B cell (primary cell): ENCODE measurements at regions of chr5 and their contacts with region 1.

Region 1: DNA sequence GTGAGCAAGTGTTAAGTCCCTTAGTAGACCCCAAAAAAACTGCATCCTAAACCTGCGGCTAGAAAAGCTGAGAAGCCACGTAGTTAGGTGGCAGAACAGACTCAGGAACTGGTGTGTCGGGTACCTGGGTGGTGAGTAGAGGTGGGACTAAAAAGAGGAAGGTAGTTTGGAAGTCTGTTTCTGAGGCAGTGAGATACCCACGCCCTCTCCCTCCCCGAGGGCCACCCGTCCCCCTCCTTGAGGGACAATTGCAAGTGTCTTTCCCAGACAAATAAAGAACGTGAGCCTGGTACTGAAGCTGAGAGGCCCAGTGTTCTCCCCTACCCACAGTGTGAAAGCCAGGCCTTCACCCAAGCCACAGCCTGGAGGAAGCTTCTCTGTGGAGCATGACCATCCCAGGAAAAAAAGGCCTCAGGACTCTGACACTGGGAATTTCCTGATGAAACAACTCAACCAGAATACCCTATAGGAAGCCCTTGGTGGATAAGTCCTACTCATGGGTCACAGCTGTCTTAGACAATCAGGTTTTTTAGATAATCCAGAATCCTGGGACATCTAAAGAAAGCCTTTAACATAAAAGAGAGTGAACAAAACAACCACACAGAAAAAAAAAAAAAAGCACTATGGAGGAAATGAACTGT is 7.0 kb upstream of the CD74 start:
- DNase-seq: peak; percentile 87
- ATAC-seq: peak; percentile 99
- H3K4me3 ChIP-seq: peak overlapping the region in 4 of 5 experiments; percentile 16 to 46 (median 33)
- H3K4me3 Mint-ChIP-seq: peak overlapping the region; percentile 81
- H3K27ac ChIP-seq: peak overlapping the region; percentile 86 to 88
- H3K27ac Mint-ChIP-seq: peak overlapping the region; percentile 100
- H3K4me1 ChIP-seq: peaks cover 67 to 72% of the 10 kb centered on the region in 2 donors
- H3K4me1 Mint-ChIP-seq: peaks cover 59% of the 10 kb centered on the region
- H3K27me3 ChIP-seq: no peaks in the 10 kb centered on the region
- H3K27me3 Mint-ChIP-seq: no peaks in the 10 kb centered on the region
- CTCF ChIP-seq: no peak

Region 2: DNA sequence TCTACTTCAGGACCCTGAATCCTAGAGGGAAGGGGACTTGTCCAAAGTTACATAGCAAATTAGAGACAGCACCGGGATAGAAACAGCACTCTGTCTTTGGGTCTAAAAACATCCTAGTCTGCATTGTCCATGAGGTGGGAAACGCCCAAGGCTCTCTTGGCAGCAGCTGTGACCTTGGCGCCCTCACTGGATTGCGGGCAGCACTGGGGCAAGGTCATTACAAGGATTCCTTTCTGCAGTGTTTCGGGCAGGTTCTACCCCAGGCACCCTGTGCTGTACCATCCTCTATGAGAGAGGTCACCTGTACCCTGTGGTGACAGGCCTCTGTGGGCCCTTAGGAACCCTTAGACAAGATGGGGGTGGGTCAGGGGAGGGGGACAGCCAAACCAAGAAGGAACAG is 15.6 kb before region 1 on chr5:
- CTCF ChIA-PET with region 1: interaction called, 14 read pairs
- POLR2A ChIA-PET with region 1: interaction called, 387 read pairs
- intact Hi-C with region 1: no loop called
- DNase-seq: no peak
- ATAC-seq: no peak
- H3K4me3 ChIP-seq: no peak overlapping the region
- H3K4me3 Mint-ChIP-seq: peak overlapping the region; percentile 24
- H3K27ac ChIP-seq: peak overlapping the region; percentile 2 to 9
- H3K27ac Mint-ChIP-seq: peak overlapping the region; percentile 78
- H3K4me1 ChIP-seq: peaks cover 33 to 77% of the 10 kb centered on the region in 2 donors
- H3K4me1 Mint-ChIP-seq: peaks cover 73% of the 10 kb centered on the region
- H3K27me3 ChIP-seq: no peaks in the 10 kb centered on the region
- H3K27me3 Mint-ChIP-seq: no peaks in the 10 kb centered on the region
- CTCF ChIP-seq: no peak